ENCODE measurements at regions of chr2 and their contacts with region 1.

Region 1: GRCh38 chr2:105114551-105114950 is 76.7 kb downstream of the MRPS9 start:
- DNase-seq: no peak
- H3K4me3 ChIP-seq: no peak overlapping the region
- H3K27ac ChIP-seq: no peak overlapping the region
- H3K4me1 ChIP-seq: no peaks in the 10 kb centered on the region
- H3K27me3 ChIP-seq: no peaks in the 10 kb centered on the region
- CTCF ChIP-seq: peak; percentile 35 to 54 (median 53)
- EP300 ChIP-seq: no peak
- POLR2A ChIP-seq: no peak

Region 2: DNA sequence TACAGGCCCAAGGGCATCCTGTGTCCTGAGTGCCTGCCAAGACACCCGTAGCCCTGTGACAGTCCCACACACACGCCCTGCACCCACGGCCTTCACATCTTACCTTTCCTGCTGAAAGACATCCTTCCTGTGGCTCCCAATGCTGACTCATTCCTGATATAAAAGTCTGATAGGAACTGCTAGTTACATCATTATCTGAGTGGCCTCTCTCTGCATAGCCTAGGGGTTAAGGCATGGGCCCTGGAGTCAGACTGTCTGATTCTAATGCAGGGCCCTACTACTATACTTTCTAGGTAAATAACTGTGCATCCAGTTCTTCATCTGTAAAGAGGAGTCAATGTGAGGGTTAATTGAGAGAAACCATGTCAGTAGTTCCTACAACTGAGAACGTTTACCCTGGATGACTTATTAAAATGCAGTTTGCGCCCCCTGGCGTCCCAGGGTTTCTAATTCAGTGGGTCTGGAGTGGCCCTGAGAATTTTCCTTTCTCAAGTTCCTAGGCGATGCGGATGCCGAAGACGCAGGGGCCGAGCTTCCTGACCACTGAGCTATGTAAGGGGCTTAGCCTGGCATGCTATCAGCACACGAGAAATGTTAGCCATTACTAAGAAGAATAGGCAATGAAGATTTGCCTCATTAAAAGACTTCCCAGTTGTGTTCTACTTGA is 121.0 kb after region 1 on chr2:
- intact Hi-C with region 1: loop called (anchors 5 to 10 kb)
- DNase-seq: peak; percentile 46 to 72 (median 52)
- H3K4me3 ChIP-seq: no peak overlapping the region
- H3K27ac ChIP-seq: no peak overlapping the region
- H3K4me1 ChIP-seq: no peaks in the 10 kb centered on the region
- H3K27me3 ChIP-seq: no peaks in the 10 kb centered on the region
- CTCF ChIP-seq: no peak
- EP300 ChIP-seq: no peak
- POLR2A ChIP-seq: no peak

Region 3: GRCh38 chr2:105294844-105295481 is 180.4 kb after region 1 on chr2:
- intact Hi-C with region 1: loop called in 2 of 4 experiments (anchors 10 kb)
- DNase-seq: peak; percentile 43 to 60 (median 52)
- H3K4me3 ChIP-seq: no peak overlapping the region
- H3K27ac ChIP-seq: no peak overlapping the region
- H3K4me1 ChIP-seq: no peaks in the 10 kb centered on the region
- H3K27me3 ChIP-seq: no peaks in the 10 kb centered on the region
- CTCF ChIP-seq: peak in 2 of 3 donors; percentile 25 to 39
- EP300 ChIP-seq: no peak
- POLR2A ChIP-seq: no peak

Region 4: DNA sequence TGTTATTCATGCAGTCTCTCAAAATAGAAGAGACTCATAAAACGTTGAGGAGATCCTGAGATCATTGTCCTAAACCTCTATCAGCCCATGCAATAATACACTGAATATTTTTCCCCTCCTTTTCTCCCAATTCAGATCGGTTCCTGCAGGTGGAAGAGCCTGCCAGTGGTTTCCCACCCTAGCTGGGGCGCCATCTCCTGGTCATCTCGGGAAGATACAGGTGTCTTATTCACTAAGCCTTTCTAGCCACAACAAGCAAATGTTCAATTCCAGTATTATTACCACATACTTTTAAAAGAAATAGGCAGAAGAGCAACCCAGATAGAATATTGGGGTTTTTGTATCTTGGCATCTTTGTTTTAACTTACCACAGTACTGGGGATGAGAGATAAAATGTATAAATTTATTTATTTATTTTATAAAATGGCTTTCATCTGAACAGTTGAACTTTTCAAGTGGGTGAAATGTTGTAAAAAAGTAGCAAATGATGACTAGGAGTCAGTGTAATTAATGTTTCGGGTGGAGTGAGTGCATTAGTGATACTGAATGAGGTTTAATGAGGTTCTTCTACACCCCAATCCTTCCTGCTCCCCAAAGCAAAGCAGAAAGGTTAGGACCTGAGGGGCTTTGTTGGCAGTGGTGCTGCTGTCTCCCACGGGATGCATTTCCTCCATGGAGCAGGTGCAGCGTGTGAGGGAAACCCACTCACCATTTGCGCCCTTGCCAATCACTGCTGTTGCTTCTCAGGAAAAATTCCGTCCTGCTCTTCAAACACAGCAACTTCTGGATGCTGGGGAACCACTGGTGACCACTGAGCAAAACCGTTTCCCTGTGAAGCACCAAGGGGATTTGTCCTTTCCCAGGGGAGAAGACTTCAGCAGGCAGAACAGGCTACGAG is 431.4 kb after region 1 on chr2:
- intact Hi-C with region 1: loop called in 2 of 4 experiments (anchors 10 kb)
- DNase-seq: peak; percentile 59 to 80 (median 78)
- H3K4me3 ChIP-seq: no peak overlapping the region
- H3K27ac ChIP-seq: no peak overlapping the region
- H3K4me1 ChIP-seq: no peaks in the 10 kb centered on the region
- H3K27me3 ChIP-seq: no peaks in the 10 kb centered on the region
- CTCF ChIP-seq: peak; percentile 57 to 69 (median 63)
- EP300 ChIP-seq: no peak
- POLR2A ChIP-seq: no peak